HEK293 (cell line): ENCODE measurements at regions of chr15 and their contacts with region 1.

Region 1: GRCh38 chr15:101489633-101490407 is at the start of gene PCSK6:
- H3K4me3 ChIP-seq: peak within 1 kb of the TSS; percentile 43
- H3K27ac ChIP-seq: peak within 1 kb of the TSS; percentile 84
- H3K4me1 ChIP-seq: peaks cover 4% of the 10 kb centered on the region
- CTCF ChIP-seq: peak; percentile 38; the same call in 1 of the 2 replicates

Region 2: DNA sequence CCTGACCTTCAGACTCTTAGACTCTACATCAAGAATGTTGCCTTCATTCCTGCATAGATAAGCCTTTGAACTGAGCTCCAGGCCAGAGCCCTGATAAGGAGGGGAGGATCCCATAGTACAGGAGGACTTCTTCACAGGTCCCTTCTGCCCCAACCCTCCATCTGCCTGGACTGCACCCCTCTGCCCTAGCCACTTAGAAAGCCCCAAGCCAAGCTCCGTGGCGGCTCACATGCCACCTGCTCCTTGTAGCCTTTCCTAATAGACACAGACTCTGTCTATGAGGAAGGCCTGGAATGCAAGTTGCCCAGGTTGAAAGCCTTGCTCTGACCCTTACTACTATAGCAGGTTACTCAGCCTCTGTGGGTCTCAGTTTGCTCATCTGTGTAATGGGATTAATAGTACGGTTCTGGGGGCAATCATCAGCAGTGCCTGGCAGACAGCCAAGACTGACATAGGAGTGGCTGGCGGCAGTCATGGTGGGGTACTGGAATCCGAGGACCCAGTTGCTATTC is 11.9 kb before region 1 on chr15:
- CTCF ChIA-PET with region 1: no interaction called
- POLR2A ChIA-PET with region 1: no interaction called
- H3K4me3 ChIP-seq: no peak overlapping the region
- H3K27ac ChIP-seq: no peak overlapping the region
- H3K4me1 ChIP-seq: no peaks in the 10 kb centered on the region
- CTCF ChIP-seq: no peak

Region 3: GRCh38 chr15:101501703-101502373 is 12.0 kb after region 1 on chr15:
- CTCF ChIA-PET with region 1: interaction called, 24 read pairs
- POLR2A ChIA-PET with region 1: no interaction called
- H3K4me3 ChIP-seq: no peak overlapping the region
- H3K27ac ChIP-seq: no peak overlapping the region
- H3K4me1 ChIP-seq: no peaks in the 10 kb centered on the region
- CTCF ChIP-seq: peak; percentile 93

Region 4: DNA sequence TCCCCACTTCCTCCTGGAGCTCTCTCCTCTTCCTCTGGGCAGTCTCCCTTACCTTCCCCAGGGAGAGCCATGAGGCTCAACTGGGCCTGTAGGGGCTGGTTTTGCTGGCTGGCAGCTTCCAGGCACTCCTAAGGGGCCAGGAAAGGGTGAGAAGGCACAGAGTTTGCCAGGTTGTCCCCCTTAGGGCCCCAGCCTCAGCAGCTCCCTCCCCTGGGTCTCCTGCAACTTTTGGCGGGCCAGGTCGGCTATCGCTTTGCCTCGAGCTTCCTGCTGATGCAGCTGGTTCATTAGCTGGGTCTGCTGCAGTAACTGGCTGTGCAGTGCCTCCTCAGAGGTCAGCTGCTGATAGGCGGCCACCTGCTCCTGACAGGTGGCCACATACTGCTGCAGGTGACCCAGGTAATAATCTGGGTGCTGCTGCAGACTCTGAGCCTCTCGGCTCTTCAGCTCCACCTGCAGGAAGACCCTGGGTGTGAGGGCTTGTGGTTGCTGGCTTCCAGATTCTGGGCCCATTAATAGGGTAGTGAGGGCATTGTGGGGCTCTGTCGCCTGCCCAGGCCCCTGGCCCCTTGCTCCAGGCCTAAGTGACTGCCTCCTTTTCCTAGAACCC is 283.8 kb after region 1 on chr15:
- CTCF ChIA-PET with region 1: interaction called, 11 read pairs
- POLR2A ChIA-PET with region 1: interaction called, 45 read pairs
- H3K4me3 ChIP-seq: no peak overlapping the region
- H3K27ac ChIP-seq: no peak overlapping the region
- H3K4me1 ChIP-seq: no peaks in the 10 kb centered on the region
- CTCF ChIP-seq: no peak